ENCODE measurements at regions of chr4 and their contacts with region 1.

Region 1: DNA sequence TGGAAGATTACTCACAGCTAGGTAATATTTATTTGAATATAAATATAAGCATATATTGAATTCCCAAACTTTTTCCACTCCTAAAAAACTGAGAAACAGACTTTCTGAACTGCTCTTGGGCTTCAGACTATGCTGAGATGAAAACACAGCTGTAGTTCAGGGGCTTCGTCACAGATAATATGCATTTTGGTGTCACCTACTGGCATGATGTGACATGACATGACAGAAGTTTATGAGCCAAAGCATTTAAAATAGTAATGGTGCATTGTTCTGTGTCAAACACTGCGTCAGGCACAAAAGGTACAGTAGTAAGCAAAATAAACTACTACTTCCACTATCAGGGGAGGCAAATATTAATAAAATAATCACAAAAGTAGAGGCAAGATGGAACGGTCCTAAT is 171.3 kb downstream of the BTC start:
- DNase-seq: peak; percentile 22
- ATAC-seq: peak; percentile 44
- H3K4me3 Mint-ChIP-seq: no peak overlapping the region
- H3K27ac Mint-ChIP-seq: peak overlapping the region; percentile 32
- H3K4me1 Mint-ChIP-seq: peaks cover 31% of the 10 kb centered on the region
- H3K27me3 Mint-ChIP-seq: peaks cover 5% of the 10 kb centered on the region

Region 2: GRCh38 chr4:74320559-74321118 is 302.4 kb before region 1 on chr4:
- CTCF ChIA-PET with region 1: interaction called, 7 read pairs
- POLR2A ChIA-PET with region 1: no interaction called
- intact Hi-C with region 1: loop called in 1 of 2 experiments (anchors 2 kb)
- DNase-seq: peak; percentile 66
- ATAC-seq: peak; percentile 99
- H3K4me3 Mint-ChIP-seq: no peak overlapping the region
- H3K27ac Mint-ChIP-seq: no peak overlapping the region
- H3K4me1 Mint-ChIP-seq: peaks cover 5% of the 10 kb centered on the region
- H3K27me3 Mint-ChIP-seq: peaks cover 2% of the 10 kb centered on the region

Region 3: GRCh38 chr4:74376888-74377483 is 246.1 kb before region 1 on chr4:
- CTCF ChIA-PET with region 1: interaction called, 5 read pairs
- POLR2A ChIA-PET with region 1: no interaction called
- intact Hi-C with region 1: loop called (anchors 2 to 5 kb)
- DNase-seq: no peak
- ATAC-seq: peak; percentile 58
- H3K4me3 Mint-ChIP-seq: no peak overlapping the region
- H3K27ac Mint-ChIP-seq: no peak overlapping the region
- H3K4me1 Mint-ChIP-seq: peaks cover 4% of the 10 kb centered on the region
- H3K27me3 Mint-ChIP-seq: peaks cover 4% of the 10 kb centered on the region

Region 4: DNA sequence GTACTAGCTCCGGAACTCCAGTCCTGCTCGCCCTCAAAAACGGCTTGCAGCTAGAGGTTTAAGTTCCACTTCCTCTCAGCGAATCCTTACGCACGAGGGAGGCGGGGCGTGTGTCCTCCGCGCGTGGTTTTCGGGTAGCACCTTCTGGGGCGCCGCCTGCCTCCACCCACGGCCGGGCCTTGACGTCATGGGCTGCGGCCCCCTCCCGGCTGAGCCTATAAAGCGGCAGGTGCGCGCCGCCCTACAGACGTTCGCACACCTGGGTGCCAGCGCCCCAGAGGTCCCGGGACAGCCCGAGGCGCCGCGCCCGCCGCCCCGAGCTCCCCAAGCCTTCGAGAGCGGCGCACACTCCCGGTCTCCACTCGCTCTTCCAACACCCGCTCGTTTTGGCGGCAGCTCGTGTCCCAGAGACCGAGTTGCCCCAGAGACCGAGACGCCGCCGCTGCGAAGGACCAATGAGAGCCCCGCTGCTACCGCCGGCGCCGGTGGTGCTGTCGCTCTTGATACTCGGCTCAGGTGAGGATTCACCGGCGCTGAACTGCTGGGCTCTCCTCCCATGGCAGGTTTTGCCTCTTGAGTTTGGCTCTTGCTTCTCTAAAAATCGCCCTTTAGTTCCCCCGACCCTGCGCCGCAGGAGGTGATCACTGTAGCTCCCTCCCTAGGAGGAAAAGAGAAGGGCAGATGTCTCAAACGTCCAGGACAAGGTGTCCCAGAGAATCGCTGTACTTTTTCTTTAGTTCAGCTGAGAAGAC is 178.0 kb before region 1 on chr4 and contains the start of gene AREG:
- CTCF ChIA-PET with region 1: interaction called, 3 read pairs
- POLR2A ChIA-PET with region 1: no interaction called
- intact Hi-C with region 1: loop called in 1 of 2 experiments (anchors 5 kb)
- DNase-seq: peak; percentile 92
- ATAC-seq: peak; percentile 88
- H3K4me3 Mint-ChIP-seq: peak within 1 kb of the TSS; percentile 92
- H3K27ac Mint-ChIP-seq: peak within 1 kb of the TSS; percentile 83
- H3K4me1 Mint-ChIP-seq: peaks cover 13% of the 10 kb centered on the region
- H3K27me3 Mint-ChIP-seq: no peaks in the 10 kb centered on the region
- total RNA-seq, gene AREG: 0.57 to 0.91 TPM

Region 5: DNA sequence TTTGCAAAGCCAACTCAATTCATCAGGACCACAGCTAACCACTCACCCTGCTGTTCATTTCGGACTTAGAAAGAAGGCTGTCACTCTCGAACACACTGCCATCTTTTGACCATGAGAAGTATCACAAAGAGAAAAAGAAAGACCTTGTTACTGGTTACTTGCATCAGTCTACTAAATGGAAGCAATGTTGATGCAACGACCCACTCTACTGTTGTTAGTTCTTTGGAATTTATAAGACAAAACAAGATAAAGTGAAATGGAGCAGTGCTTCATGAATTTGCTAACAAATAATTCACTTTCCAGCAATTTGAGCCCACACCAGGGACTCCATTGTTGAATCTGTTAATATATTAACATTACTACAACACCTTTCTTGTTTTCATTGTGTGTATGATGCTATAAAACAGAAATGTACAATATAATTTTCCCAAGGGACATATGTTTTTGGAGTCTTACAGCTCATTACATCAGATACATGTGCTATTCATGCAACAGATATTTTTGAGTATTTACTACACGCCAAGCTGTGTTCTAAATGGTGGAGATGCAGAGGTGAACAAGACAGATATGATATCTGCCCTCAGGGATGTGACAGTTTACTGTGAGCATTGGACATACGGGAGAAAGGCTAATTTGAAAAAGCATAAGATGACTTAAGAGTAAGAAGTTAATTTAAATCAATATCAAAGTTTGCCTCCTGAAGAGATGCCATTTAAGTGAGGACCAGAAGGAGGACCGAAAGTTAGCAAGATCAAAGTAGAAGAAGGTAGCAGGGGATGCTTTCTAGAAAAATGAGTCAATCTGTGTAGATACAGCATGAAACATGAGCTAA is 90.9 kb before region 1 on chr4:
- CTCF ChIA-PET with region 1: interaction called, 3 read pairs
- POLR2A ChIA-PET with region 1: no interaction called
- intact Hi-C with region 1: loop called in 1 of 2 experiments (anchors 5 kb)
- DNase-seq: peak; percentile 20
- ATAC-seq: peak; percentile 74
- H3K4me3 Mint-ChIP-seq: no peak overlapping the region
- H3K27ac Mint-ChIP-seq: no peak overlapping the region
- H3K4me1 Mint-ChIP-seq: no peaks in the 10 kb centered on the region
- H3K27me3 Mint-ChIP-seq: peaks cover 2% of the 10 kb centered on the region

Region 6: GRCh38 chr4:74638001-74638400 is 15.0 kb after region 1 on chr4:
- CTCF ChIA-PET with region 1: interaction called, 13 read pairs
- POLR2A ChIA-PET with region 1: no interaction called
- intact Hi-C with region 1: no loop called
- DNase-seq: no peak
- ATAC-seq: no peak
- H3K4me3 Mint-ChIP-seq: no peak overlapping the region
- H3K27ac Mint-ChIP-seq: no peak overlapping the region
- H3K4me1 Mint-ChIP-seq: peaks cover 10% of the 10 kb centered on the region
- H3K27me3 Mint-ChIP-seq: peaks cover 5% of the 10 kb centered on the region

Region 7: GRCh38 chr4:74659576-74660411 is 36.8 kb after region 1 on chr4:
- CTCF ChIA-PET with region 1: interaction called, 6 read pairs
- POLR2A ChIA-PET with region 1: no interaction called
- intact Hi-C with region 1: loop called (anchors 2 to 5 kb)
- DNase-seq: peak; percentile 15
- ATAC-seq: peak; percentile 78
- H3K4me3 Mint-ChIP-seq: no peak overlapping the region
- H3K27ac Mint-ChIP-seq: peak overlapping the region; percentile 42
- H3K4me1 Mint-ChIP-seq: peaks cover 25% of the 10 kb centered on the region
- H3K27me3 Mint-ChIP-seq: peaks cover 7% of the 10 kb centered on the region

Measured in activated CD4-positive, alpha-beta T cell treated with anti-CD3 and anti-CD28 coated beads for 36 hours (primary cell).